Naive thymus-derived CD4-positive, alpha-beta T cell (primary cell): ENCODE measurements at regions of chr2 and their contacts with region 1.

Region 1: DNA sequence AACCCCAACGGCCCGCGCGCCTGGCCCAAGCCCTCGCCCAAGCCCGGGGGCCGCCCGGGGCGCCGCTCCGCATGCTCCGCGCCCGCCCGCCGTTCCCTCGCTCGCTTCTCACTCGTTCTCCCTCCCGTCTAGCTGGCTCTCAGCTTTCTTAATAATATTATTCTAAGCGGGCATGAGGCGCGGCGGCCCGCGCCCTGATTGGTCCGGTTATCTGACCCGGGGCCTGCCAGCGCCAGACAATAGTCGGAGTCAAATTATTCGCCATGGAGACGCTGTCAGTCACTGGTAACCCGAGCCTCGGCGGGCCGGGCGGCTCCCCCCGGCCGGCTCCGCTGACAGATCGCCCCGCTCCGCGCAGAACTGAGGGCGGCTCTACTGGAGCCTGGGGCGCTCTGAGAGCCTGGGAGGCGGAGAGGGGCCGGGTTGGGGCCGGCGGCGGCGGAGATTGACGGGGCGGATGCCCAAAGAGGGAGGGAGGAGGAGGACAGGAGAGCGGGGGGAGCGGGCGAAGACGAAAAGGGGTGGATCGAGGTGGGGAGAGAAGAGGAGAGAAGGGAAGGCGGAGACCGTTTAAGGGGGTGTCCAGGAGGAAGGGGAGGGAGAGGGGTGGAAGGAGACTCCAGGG is at the start of gene SIX2:
- DNase-seq: no peak
- ATAC-seq: no peak
- H3K4me3 ChIP-seq: peak within 1 kb of the TSS; percentile 27
- H3K4me3 Mint-ChIP-seq: peak within 1 kb of the TSS; percentile 56 to 82 (median 69)
- H3K27ac ChIP-seq: no peak within 1 kb of the TSS
- H3K27ac Mint-ChIP-seq: peak within 1 kb of the TSS in 1 of 9 donors; percentile 62
- H3K4me1 ChIP-seq: no peaks in the 10 kb centered on the region
- H3K4me1 Mint-ChIP-seq: peaks cover 6 to 41% (median 35%) of the 10 kb centered on the region in 7 donors
- H3K27me3 ChIP-seq: peaks cover 4 to 5% of the 10 kb centered on the region in 2 donors
- H3K27me3 Mint-ChIP-seq: peaks cover 54 to 80% (median 66%) of the 10 kb centered on the region in 5 donors
- total RNA-seq, gene SIX2: not detected

Region 2: DNA sequence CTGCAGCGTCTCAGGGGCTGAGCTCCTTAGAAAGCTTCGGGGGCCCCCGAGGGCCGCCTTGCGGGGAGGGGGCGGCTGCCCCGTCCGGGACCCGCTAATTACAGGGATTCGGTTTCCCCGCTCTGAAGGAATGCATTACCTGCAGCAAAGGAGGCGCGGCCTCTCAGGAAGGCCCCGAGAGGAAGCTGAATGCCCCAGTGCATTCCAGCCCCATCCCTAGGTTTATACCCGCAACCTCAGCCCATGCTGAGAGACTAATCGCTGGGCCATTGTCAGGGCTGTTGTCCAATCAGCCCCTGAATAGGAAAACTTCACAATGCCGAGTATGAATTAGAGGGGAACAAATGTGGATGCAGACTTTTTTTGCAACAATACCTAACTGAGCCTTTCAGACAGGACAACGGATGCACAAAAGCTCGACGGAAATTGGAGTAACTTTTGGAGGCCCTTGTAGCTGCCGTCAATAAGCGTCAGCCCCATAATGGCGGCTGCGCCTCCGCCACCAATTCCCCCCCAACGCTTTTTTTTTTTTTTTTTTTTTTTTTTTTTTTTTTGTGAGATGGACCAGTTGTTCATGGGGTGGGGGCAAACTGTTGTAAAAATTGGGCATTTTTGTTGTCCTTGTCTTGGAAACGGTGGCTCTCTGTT is 206.5 kb before region 1 on chr2:
- CTCF ChIA-PET with region 1: no interaction called
- POLR2A ChIA-PET with region 1: no interaction called
- intact Hi-C with region 1: loop called in 1 of 2 experiments (anchors 5 kb)
- DNase-seq: no peak
- ATAC-seq: no peak
- H3K4me3 ChIP-seq: no peak overlapping the region
- H3K4me3 Mint-ChIP-seq: peak overlapping the region in 7 of 10 donors; percentile 18 to 80 (median 36)
- H3K27ac ChIP-seq: no peak overlapping the region
- H3K27ac Mint-ChIP-seq: no peak overlapping the region
- H3K4me1 ChIP-seq: peaks cover 0 to 7% of the 10 kb centered on the region in 2 donors
- H3K4me1 Mint-ChIP-seq: peaks cover 0 to 23% (median 18%) of the 10 kb centered on the region in 7 donors
- H3K27me3 ChIP-seq: peaks cover 4 to 23% of the 10 kb centered on the region in 2 donors
- H3K27me3 Mint-ChIP-seq: peaks cover 77 to 91% (median 87%) of the 10 kb centered on the region in 5 donors

Region 3: DNA sequence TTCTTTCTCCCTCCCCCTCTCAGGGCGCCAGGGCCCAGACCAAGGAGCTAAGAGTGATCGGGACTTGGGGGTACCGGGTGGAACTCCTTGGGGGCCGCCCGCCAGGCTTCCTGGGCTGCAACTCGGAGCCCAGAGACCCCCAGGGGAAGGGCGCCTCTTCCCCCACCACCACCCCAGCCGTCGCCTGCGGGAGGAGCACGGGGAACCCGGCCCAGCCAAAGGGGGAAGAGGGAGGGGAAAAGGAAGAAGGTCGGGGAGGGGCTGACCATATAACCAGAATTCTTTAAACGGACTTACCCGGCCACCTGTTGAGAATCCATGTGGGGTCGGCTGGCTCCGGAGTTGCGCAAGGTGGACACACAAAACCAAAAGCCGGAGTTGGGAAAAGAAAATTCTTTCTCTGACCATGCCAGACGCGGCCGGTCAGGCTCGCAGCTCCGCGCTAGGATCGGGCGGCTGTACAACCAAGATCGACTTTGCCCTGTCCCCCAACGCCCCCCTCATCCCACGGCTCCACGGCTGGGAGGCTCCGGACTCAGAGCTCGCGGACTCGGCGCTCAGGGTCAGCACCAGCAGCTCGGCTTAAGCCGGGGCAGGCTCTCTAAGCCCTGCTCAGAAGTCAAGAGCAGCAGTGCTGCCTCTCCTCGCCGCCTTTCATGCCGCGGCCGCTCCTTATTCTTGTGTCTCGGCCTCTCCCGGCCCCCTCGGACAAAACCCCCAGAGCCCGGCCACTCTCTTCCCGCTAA is 74.3 kb before region 1 on chr2:
- CTCF ChIA-PET with region 1: no interaction called
- POLR2A ChIA-PET with region 1: no interaction called
- intact Hi-C with region 1: loop called in 1 of 2 experiments (anchors 2 kb)
- DNase-seq: no peak
- ATAC-seq: no peak
- H3K4me3 ChIP-seq: no peak overlapping the region
- H3K4me3 Mint-ChIP-seq: peak overlapping the region in 1 of 10 donors; percentile 30
- H3K27ac ChIP-seq: no peak overlapping the region
- H3K27ac Mint-ChIP-seq: no peak overlapping the region
- H3K4me1 ChIP-seq: no peaks in the 10 kb centered on the region
- H3K4me1 Mint-ChIP-seq: peaks cover 8 to 57% (median 39%) of the 10 kb centered on the region in 7 donors
- H3K27me3 ChIP-seq: peaks cover 9% of the 10 kb centered on the region in 2 donors
- H3K27me3 Mint-ChIP-seq: peaks cover 54 to 86% (median 71%) of the 10 kb centered on the region in 5 donors

Region 4: GRCh38 chr2:45169339-45170190 is 160.2 kb after region 1 on chr2:
- CTCF ChIA-PET with region 1: no interaction called
- POLR2A ChIA-PET with region 1: no interaction called
- intact Hi-C with region 1: loop called in 1 of 2 experiments (anchors 5 kb)
- DNase-seq: peak in 1 of 9 donors; percentile 21
- ATAC-seq: no peak
- H3K4me3 ChIP-seq: no peak overlapping the region
- H3K4me3 Mint-ChIP-seq: peak overlapping the region in 4 of 10 donors; percentile 37 to 64 (median 48)
- H3K27ac ChIP-seq: no peak overlapping the region
- H3K27ac Mint-ChIP-seq: no peak overlapping the region
- H3K4me1 ChIP-seq: no peaks in the 10 kb centered on the region
- H3K4me1 Mint-ChIP-seq: peaks cover 0 to 15% (median 4%) of the 10 kb centered on the region in 7 donors
- H3K27me3 ChIP-seq: peaks cover 4% of the 10 kb centered on the region in 2 donors
- H3K27me3 Mint-ChIP-seq: peaks cover 62 to 79% (median 77%) of the 10 kb centered on the region in 5 donors